Common myeloid progenitor, CD34-positive (primary cell): ENCODE measurements at regions of chr7 and their contacts with region 1.

Region 1: GRCh38 chr7:64951250-64951848 is 39.5 kb downstream of the ZNF117 start:
- DNase-seq: peak; percentile 46 to 75 (median 73)
- H3K4me3 ChIP-seq: no peak overlapping the region
- H3K27ac ChIP-seq: no peak overlapping the region
- H3K4me1 ChIP-seq: peaks cover 0 to 13% (median 12%) of the 10 kb centered on the region in 4 experiments
- H3K27me3 ChIP-seq: peaks cover 5 to 33% (median 11%) of the 10 kb centered on the region in 5 experiments

Region 2: DNA sequence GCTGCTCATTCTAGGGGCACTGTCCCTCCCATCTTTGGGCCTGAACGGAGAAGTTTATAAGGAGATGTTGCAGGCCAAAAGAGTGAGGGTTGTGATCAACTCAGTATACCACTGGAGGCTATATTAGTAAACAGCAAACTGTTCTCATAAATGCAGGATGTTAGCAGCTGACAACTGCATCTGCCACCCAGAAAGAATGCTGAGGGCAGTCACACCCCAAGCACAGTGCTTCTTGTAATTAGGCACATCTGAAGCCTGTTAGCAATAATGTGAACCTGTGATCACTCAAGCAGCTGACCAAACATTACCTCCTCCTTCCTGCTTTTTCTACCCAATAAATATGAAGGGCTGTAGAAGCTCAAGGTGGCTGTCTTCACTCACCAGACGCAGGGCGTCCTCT is 195.5 kb before region 1 on chr7:
- CTCF ChIA-PET with region 1: no interaction called
- POLR2A ChIA-PET with region 1: no interaction called
- DNase-seq: no peak
- H3K4me3 ChIP-seq: no peak overlapping the region
- H3K27ac ChIP-seq: no peak overlapping the region
- H3K4me1 ChIP-seq: peaks cover 0 to 2% (median 0%) of the 10 kb centered on the region in 4 experiments
- H3K27me3 ChIP-seq: no peaks in the 10 kb centered on the region

Region 3: DNA sequence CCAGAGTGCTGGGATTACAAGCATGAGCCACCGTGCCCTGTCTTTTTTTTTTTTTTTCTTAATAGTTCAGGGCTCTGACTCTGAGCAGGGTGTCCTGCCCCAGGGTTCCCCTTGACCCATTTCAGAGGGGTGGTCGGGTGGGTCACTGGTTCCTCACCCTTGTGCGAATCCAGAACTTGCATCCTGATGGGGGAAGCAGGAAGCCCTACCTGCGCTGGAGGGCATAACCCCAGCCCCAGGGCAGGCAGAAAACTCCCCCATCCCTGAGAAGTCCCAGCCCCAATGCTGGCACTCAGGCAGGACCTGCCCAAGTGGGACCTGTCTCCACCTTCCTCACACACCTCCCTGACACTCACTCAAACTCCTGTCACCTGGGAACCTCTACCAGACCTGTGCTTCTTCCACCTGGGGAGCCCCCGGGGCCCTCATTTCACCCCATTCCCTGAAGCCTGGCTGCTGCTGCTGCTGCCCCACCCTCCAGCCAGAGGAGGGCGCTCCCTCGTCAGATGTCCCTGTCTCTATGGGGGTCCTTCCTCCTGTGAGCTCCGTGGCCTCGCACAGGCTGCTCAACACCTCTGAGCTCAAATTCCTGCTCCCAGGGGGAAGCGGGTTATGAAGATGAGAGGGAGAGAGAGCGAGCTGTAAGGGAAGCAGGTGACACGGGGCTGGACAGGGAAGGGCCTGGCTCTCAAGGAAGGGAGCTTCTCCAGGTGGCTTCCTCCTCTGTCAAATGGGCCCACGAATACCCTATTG is 63.4 kb before region 1 on chr7:
- CTCF ChIA-PET with region 1: interaction called, 19 read pairs
- POLR2A ChIA-PET with region 1: no interaction called
- DNase-seq: peak; percentile 56 to 79 (median 74)
- H3K4me3 ChIP-seq: peak overlapping the region; percentile 48 to 84 (median 74)
- H3K27ac ChIP-seq: no peak overlapping the region
- H3K4me1 ChIP-seq: peaks cover 2 to 24% (median 20%) of the 10 kb centered on the region in 4 experiments
- H3K27me3 ChIP-seq: peaks cover 0 to 59% (median 32%) of the 10 kb centered on the region in 5 experiments

Region 4: DNA sequence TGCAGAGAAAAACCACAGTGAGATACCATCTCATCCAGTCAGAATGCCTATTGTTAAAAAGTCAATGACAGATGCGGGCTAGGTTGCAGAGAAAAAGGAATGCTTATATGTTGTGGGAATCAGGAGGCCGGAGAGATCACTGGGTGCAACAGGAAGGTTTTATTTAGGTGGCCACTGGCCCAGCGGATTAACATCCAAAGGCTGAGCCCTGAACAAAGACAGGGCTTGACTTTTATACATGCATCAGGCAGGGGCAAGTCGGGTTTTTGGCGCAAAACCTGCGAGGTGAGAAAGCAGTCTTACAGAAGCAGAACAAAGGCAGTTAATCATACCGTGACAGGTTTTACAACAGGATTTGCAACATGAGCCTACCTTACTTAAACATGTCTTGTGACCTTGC is 38.9 kb after region 1 on chr7:
- CTCF ChIA-PET with region 1: no interaction called
- POLR2A ChIA-PET with region 1: no interaction called
- DNase-seq: no peak
- H3K4me3 ChIP-seq: no peak overlapping the region
- H3K27ac ChIP-seq: no peak overlapping the region
- H3K4me1 ChIP-seq: peaks cover 0 to 1% (median 0%) of the 10 kb centered on the region in 4 experiments
- H3K27me3 ChIP-seq: no peaks in the 10 kb centered on the region

Region 5: DNA sequence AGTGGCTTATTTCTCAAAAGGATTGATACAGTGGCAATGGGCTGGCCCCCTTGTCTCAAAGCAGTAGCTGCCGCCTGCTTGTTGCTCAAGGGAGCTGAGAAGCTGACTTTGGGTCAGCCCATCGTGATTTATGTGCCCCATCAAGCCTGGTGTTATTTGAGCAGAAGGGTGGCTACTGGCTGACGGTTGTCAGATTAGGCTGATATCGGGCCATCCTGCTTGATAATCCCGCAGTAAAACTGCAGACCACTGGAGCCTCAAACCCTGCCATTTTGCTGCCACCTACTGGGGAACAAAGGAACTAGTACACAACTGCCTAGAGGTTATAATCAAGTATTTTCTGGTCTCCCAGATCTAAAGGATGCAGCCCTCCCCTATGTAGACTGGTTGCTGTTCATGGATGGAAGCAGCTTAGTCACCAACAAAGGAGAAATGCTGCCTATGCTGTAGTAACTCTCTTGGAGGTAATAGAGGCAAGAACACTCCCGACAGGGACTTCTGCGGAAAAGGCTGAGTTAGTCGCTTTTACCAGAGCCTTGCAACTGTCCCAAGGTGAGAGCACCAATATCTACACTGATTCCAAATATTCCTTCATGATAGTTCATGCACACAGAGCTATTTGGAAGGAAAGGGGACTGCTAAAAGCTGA is 356.4 kb after region 1 on chr7:
- CTCF ChIA-PET with region 1: interaction called, 27 read pairs
- POLR2A ChIA-PET with region 1: no interaction called
- DNase-seq: peak; percentile 71 to 86 (median 84)
- H3K4me3 ChIP-seq: no peak overlapping the region
- H3K27ac ChIP-seq: no peak overlapping the region
- H3K4me1 ChIP-seq: no peaks in the 10 kb centered on the region
- H3K27me3 ChIP-seq: peaks cover 0 to 9% (median 3%) of the 10 kb centered on the region in 5 experiments

Region 6: GRCh38 chr7:66330961-66331360 is 1379.6 kb after region 1 on chr7:
- CTCF ChIA-PET with region 1: no interaction called
- POLR2A ChIA-PET with region 1: no interaction called
- DNase-seq: no peak
- H3K4me3 ChIP-seq: no peak overlapping the region
- H3K27ac ChIP-seq: no peak overlapping the region
- H3K4me1 ChIP-seq: no peaks in the 10 kb centered on the region
- H3K27me3 ChIP-seq: no peaks in the 10 kb centered on the region